ENCODE measurements at regions of chr5 and their contacts with region 1.

Region 1: DNA sequence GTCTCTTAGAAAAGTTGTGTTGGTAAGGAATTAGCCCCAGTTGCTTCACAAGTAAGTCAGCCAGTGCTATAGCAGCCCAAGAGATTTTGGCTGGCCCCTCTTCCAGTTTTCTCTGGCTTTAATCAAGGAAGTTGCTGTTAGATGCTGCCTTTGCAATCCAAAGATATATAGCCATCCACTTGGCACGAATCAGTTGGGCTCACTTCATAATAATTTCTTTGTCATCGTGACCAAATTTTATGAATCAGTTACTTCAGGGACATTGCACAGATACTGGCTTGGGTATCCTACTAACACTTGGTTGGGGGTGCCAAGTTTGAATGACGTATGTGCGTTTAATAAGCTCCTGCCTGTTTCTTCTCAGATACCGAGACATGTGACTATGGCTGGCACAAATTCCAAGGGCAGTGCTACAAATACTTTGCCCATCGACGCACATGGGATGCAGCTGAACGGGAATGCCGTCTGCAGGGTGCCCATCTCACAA is 81.5 kb downstream of the VCAN start:
- DNase-seq: no peak
- ATAC-seq: no peak
- H3K4me3 ChIP-seq: no peak overlapping the region
- H3K4me3 Mint-ChIP-seq: no peak overlapping the region
- H3K27ac ChIP-seq: no peak overlapping the region
- H3K27ac Mint-ChIP-seq: no peak overlapping the region
- H3K4me1 ChIP-seq: no peaks in the 10 kb centered on the region
- H3K4me1 Mint-ChIP-seq: no peaks in the 10 kb centered on the region
- H3K27me3 ChIP-seq: no peaks in the 10 kb centered on the region
- H3K27me3 Mint-ChIP-seq: no peaks in the 10 kb centered on the region

Region 2: GRCh38 chr5:82068723-82069122 is 1484.3 kb before region 1 on chr5:
- CTCF ChIA-PET with region 1: no interaction called
- POLR2A ChIA-PET with region 1: no interaction called
- DNase-seq: peak in 1 of 35 experiments; percentile 35
- ATAC-seq: peak in 1 of 4 experiments; percentile 76
- H3K4me3 ChIP-seq: no peak overlapping the region
- H3K4me3 Mint-ChIP-seq: peak overlapping the region; percentile 43 to 62 (median 55)
- H3K27ac ChIP-seq: no peak overlapping the region
- H3K27ac Mint-ChIP-seq: peak overlapping the region in 1 of 2 donors; percentile 11
- H3K4me1 ChIP-seq: no peaks in the 10 kb centered on the region
- H3K4me1 Mint-ChIP-seq: peaks cover 7 to 11% (median 9%) of the 10 kb centered on the region in 3 donors
- H3K27me3 ChIP-seq: no peaks in the 10 kb centered on the region
- H3K27me3 Mint-ChIP-seq: no peaks in the 10 kb centered on the region

Region 3: DNA sequence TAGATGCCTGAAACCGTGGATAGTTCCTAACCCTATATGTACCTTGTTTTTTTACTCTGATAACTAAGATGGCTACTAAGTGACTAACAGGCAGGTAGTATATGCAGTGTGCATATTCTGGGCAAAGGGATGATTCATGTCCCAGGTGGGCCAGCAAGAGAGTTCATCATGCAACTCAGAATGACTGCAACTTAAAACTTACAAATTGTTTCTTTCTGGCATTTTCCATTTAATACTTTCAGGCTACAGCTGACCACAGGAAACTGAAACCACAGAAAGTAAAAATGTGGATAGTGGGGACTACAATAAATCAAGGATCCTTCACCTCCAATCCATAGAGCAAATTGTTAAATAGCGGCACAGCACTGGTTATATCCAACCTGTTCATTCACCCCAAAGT is 112.2 kb before region 1 on chr5:
- CTCF ChIA-PET with region 1: no interaction called
- POLR2A ChIA-PET with region 1: interaction called in 1 of 2 experiments, 10 read pairs
- DNase-seq: no peak
- ATAC-seq: no peak
- H3K4me3 ChIP-seq: no peak overlapping the region
- H3K4me3 Mint-ChIP-seq: no peak overlapping the region
- H3K27ac ChIP-seq: no peak overlapping the region
- H3K27ac Mint-ChIP-seq: no peak overlapping the region
- H3K4me1 ChIP-seq: no peaks in the 10 kb centered on the region
- H3K4me1 Mint-ChIP-seq: no peaks in the 10 kb centered on the region
- H3K27me3 ChIP-seq: no peaks in the 10 kb centered on the region
- H3K27me3 Mint-ChIP-seq: no peaks in the 10 kb centered on the region